ENCODE measurements at regions of chr16 and their contacts with region 1.

Region 1: GRCh38 chr16:10992797-10993196 is 48.4 kb downstream of the CLEC16A start:
- DNase-seq: no peak
- ATAC-seq: peak in 2 of 4 donors; percentile 41 to 76
- H3K4me3 ChIP-seq: no peak overlapping the region
- H3K27ac ChIP-seq: no peak overlapping the region
- H3K4me1 ChIP-seq: peaks cover 0 to 12% (median 1%) of the 10 kb centered on the region in 12 donors
- H3K27me3 ChIP-seq: no peaks in the 10 kb centered on the region
- CTCF ChIP-seq: no peak
- POLR2A ChIP-seq: no peak

Region 2: DNA sequence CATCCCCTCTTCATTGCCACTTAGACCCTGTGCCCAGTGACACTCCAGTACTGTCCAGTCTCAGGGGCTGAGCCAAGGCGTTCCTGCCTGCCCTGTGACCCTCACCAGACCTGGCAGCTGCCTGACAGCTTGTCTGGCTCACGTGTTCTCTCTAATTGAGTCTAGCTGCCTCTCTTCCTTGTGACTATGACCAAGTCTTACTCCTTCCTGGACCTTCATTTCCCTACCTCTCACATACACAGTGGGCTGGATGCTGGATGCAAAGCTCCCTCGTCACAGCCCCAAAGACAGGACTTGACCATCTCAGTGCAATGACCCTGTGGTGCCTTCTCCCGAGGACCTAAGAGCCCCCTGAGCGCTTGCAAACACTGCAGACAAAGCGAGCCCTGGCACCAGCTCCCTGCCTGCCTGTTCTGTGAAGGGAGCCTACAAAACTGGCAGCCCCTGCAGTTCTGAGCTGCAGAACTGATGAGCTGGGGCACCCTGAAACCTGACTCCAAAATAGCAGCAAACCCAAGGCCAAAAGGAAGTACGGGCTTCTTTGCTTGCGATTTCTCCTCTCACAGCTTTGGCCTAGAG is 52.2 kb before region 1 on chr16:
- intact Hi-C with region 1: no loop called
- DNase-seq: peak in 1 of 5 donors; percentile 42
- ATAC-seq: peak in 1 of 4 donors; percentile 3
- H3K4me3 ChIP-seq: peak overlapping the region; percentile 58 to 99 (median 84)
- H3K27ac ChIP-seq: peak overlapping the region; percentile 58 to 96 (median 88)
- H3K4me1 ChIP-seq: peaks cover 11 to 84% (median 71%) of the 10 kb centered on the region in 12 donors
- H3K27me3 ChIP-seq: no peaks in the 10 kb centered on the region
- CTCF ChIP-seq: no peak
- POLR2A ChIP-seq: no peak

Region 3: GRCh38 chr16:11079652-11080187 is 86.9 kb after region 1 on chr16:
- intact Hi-C with region 1: loop called in 1 of 10 experiments (anchors 10 kb)
- DNase-seq: peak in 1 of 5 donors; percentile 19
- ATAC-seq: no peak
- H3K4me3 ChIP-seq: no peak overlapping the region
- H3K27ac ChIP-seq: peak overlapping the region in 1 of 12 donors; percentile 65
- H3K4me1 ChIP-seq: peaks cover 0 to 28% (median 10%) of the 10 kb centered on the region in 12 donors
- H3K27me3 ChIP-seq: no peaks in the 10 kb centered on the region
- CTCF ChIP-seq: no peak
- POLR2A ChIP-seq: no peak